H1 (cell line): ENCODE measurements at regions of chr17 and their contacts with region 1.

Region 1: DNA sequence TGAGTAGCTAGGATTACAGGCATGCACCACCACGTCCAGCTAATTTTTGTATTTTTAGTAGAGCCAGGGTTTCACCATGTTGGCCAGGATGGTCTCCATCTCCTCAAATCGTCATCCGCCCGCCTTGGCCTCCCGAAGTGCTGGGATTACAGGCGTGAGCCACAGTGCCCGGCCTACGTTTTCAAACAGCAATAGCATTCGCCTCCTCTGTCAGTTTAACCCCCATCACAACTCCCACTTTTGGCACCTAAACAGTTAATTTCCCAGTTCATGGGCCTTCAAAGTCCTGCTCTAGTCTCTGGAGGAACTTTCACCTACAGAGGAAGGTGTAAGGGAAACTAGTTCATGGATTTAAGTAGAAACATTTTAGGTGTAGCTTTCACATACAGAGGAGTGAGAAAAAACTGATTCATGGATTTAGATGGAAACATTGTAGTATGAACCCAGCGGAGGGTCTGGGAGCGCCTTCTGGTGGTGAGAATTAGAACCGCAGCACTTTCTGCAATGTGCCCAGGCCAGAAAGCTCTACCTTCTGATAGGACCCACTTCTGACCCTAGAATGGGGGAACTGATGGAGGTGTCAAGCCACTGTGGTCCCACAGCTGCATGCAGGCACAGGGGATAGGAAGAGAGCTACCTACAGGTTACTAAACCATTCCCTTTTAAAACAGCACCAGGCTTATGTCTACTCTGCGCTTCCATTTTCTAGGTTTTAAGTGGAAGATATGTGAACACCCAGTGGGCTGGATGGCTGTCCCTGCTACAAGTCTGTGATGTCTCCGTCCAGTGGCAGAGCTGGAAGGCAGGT is 12.0 kb upstream of the MEOX1 start:
- DNase-seq: peak in 1 of 2 experiments; percentile 93
- H3K4me3 ChIP-seq: no peak overlapping the region
- H3K27ac ChIP-seq: no peak overlapping the region
- H3K4me1 ChIP-seq: peaks cover 0 to 20% (median 13%) of the 10 kb centered on the region in 4 experiments; a peak in 6 of 7 replicates
- H3K27me3 ChIP-seq: 0 out of 7 replicates have a peak, but pooled peaks cover 0 to 2% (median 0%) of the 10 kb centered on the region in 4 experiments
- CTCF ChIP-seq: peak; percentile 84 to 92 (median 91)
- EP300 ChIP-seq: no peak
- POLR2A ChIP-seq: no peak
- RAD21 ChIP-seq: peak; percentile 94 to 95

Region 2: DNA sequence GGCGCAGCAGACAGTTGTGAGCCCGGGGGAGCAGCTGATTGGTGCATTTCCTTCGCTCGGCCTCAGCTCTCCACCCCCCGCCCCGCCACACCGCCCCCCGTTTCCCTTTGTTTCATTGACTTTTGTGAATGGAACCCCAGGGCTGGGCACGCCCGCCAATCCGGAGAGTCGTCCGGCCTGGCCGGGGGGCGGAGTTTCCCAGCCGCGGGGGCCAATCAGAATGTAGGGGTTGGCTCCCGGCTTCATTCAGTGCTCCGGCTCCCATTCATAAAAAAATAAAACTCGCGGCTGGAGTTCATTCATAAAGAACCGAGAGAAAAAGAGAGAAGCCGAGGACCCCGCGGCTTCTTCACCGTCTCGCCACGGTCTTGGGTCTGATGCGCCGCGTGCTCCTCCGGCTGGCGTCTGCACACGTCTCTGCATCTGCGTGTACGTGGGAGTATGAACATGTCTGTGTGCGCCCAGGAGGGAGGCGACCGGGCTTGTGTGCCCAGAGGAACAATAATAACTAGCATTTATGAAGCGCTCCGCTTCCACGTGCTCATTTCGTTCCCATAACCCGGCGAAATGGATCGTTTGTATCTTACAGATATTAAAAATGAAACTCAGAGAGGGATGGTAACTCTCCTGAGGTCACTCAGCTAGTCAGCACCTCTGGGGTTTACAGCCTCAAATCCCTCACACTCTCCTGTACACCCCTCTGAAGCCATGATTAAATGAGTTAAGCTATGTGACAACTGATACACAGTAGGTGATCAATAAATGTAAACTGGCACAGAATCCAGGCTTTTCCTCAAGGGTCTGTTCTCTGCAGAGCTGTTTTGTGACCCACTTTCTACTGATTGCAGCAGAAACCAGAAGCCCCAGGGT is 127.2 kb before region 1 on chr17 and contains the start of gene ETV4:
- CTCF ChIA-PET with region 1: interaction called, 10 read pairs
- POLR2A ChIA-PET with region 1: interaction called, 4 read pairs
- DNase-seq: peak; percentile 84 to 96
- H3K4me3 ChIP-seq: peak within 1 kb of the TSS; percentile 56 to 71 (median 64)
- H3K27ac ChIP-seq: peak within 1 kb of the TSS; percentile 82; the same call in 1 of the 2 replicates
- H3K4me1 ChIP-seq: peaks cover 24 to 35% (median 30%) of the 10 kb centered on the region in 4 experiments
- H3K27me3 ChIP-seq: peaks cover 0 to 12% (median 7%) of the 10 kb centered on the region in 4 experiments; a peak in 5 of 7 replicates
- CTCF ChIP-seq: no peak
- EP300 ChIP-seq: no peak
- POLR2A ChIP-seq: 0 out of 3 replicates have a peak, but pooled peaks of 1 of the 2 experiments have one; percentile 1
- RAD21 ChIP-seq: no peak
- total RNA-seq, gene ETV4: 137 and 143 TPM in 2 replicates

Region 3: GRCh38 chr17:43591779-43592562 is 81.7 kb before region 1 on chr17:
- CTCF ChIA-PET with region 1: interaction called, 18 read pairs
- POLR2A ChIA-PET with region 1: no interaction called
- DNase-seq: no peak
- H3K4me3 ChIP-seq: no peak overlapping the region
- H3K27ac ChIP-seq: no peak overlapping the region
- H3K4me1 ChIP-seq: peaks cover 0 to 4% (median 0%) of the 10 kb centered on the region in 4 experiments; a peak in 2 of 7 replicates
- H3K27me3 ChIP-seq: no peaks in the 10 kb centered on the region
- CTCF ChIP-seq: no peak
- EP300 ChIP-seq: no peak
- POLR2A ChIP-seq: no peak
- RAD21 ChIP-seq: no peak

Region 4: DNA sequence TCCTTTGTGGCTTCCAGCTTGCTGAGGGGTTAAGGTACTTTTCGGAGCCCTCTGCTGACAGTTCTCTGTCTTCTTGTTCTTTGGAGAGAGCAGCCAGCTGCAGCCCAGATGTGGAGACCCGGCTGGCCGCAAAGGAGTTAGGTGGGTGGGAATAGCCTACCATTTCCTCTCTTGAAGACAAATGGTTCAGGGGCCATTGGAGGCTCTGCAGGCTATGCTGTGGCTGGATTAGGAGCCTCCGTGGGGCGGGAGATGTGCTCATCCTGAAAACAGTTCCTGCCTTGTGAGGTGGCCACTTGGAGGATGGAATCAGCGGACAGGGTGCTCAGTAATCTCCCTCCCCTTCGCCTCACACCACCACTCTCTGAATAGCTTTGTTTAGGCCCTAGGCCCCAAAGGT is 42.3 kb before region 1 on chr17:
- CTCF ChIA-PET with region 1: interaction called, 17 read pairs
- POLR2A ChIA-PET with region 1: no interaction called
- DNase-seq: no peak
- H3K4me3 ChIP-seq: no peak overlapping the region
- H3K27ac ChIP-seq: no peak overlapping the region
- H3K4me1 ChIP-seq: peaks cover 0 to 8% (median 3%) of the 10 kb centered on the region in 4 experiments; a peak in 5 of 7 replicates
- H3K27me3 ChIP-seq: no peaks in the 10 kb centered on the region
- CTCF ChIP-seq: no peak
- EP300 ChIP-seq: no peak
- POLR2A ChIP-seq: no peak
- RAD21 ChIP-seq: no peak

Region 5: DNA sequence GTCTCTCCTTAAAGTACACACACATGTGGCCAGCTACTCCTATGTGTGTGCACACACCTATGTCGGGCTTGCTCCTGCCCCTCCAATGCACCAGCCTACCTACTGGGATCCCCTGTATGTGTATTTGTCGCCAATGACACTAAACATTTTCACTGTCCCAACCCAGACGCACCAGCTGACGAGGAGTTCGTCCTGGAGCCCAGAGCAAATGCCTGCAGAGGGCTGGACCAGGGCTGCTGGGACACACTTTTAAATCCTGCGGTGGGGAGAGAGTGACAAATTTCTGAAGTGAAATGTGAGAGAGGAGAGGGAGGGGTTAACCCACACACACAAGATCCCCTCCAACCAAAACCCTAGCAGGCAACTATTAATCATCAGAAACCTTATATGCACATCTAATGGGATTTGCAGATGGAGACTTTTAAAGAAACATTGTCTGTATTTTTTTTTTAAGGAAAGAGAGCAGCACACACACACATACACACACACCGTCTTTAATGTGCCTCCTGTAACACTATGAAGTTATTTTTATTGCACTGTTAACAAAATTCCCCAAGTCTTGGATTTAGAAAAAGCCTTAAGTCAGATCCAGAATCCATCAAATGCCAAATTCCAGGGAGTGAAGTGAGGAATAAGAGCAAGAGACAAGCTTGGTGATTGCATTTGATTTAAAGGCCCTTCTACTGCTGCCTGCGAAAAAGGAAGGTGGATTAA is 11.9 kb before region 1 on chr17 and contains the start of gene MEOX1:
- CTCF ChIA-PET with region 1: interaction called, 29 read pairs
- POLR2A ChIA-PET with region 1: interaction called, 6 read pairs
- DNase-seq: no peak
- H3K4me3 ChIP-seq: no peak within 1 kb of the TSS
- H3K27ac ChIP-seq: no peak within 1 kb of the TSS
- H3K4me1 ChIP-seq: peaks cover 3 to 26% (median 16%) of the 10 kb centered on the region in 4 experiments; a peak in 5 of 7 replicates
- H3K27me3 ChIP-seq: no peaks in the 10 kb centered on the region; a peak in 1 of 7 replicates
- CTCF ChIP-seq: no peak
- EP300 ChIP-seq: no peak
- POLR2A ChIP-seq: no peak
- RAD21 ChIP-seq: no peak
- total RNA-seq, gene MEOX1: not detected in 2 replicates

Region 6: GRCh38 chr17:43760254-43760852 is 86.6 kb after region 1 on chr17:
- CTCF ChIA-PET with region 1: interaction called, 38 read pairs
- POLR2A ChIA-PET with region 1: no interaction called
- DNase-seq: peak; percentile 95 to 98
- H3K4me3 ChIP-seq: no peak overlapping the region
- H3K27ac ChIP-seq: no peak overlapping the region
- H3K4me1 ChIP-seq: peaks cover 4 to 21% (median 8%) of the 10 kb centered on the region in 4 experiments; a peak in 6 of 7 replicates
- H3K27me3 ChIP-seq: peaks cover 0 to 17% (median 10%) of the 10 kb centered on the region in 4 experiments; a peak in 5 of 7 replicates
- CTCF ChIP-seq: peak; percentile 100
- EP300 ChIP-seq: no peak
- POLR2A ChIP-seq: no peak
- RAD21 ChIP-seq: peak; percentile 100